Activated CD4-positive, alpha-beta T cell treated with anti-CD3 and anti-CD28 coated beads for 36 hours (primary cell): ENCODE measurements at regions of chr5 and their contacts with region 1.

Region 1: DNA sequence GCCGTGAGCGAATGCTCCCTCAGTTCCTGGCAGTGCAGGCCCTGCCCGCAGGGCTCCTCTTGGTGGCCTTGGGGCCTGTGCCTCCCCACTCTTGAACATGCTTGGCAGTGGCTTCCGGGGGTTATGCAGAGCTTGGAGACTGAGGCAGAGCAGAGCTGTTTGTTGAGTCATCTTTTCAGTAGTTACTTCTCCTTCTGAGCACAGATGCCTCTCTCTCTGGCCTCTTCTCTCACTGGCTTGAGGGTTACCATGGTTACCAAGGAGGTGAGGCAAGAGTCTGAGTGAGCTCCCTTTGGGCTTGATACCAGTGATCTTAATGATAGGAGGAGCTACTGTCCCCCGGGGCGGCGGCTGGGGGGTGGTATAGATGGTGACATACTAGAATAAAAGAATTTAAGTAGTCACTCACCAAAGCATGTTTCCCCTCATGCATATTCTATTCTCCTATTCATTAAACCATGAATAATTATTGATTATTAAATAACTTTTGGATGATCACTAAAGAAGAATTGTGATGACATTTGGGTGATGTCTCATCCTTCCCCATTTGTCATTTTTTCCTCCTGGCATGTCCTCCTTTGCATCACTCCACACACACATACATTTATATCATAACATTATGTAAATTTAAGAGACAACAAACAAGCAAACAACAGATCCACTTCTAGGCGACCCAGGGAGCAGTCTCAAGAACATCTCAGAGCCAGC is 111.1 kb downstream of the ARHGAP26 start:
- DNase-seq: no peak
- ATAC-seq: peak; percentile 58
- H3K4me3 Mint-ChIP-seq: no peak overlapping the region
- H3K27ac Mint-ChIP-seq: no peak overlapping the region
- H3K4me1 Mint-ChIP-seq: no peaks in the 10 kb centered on the region
- H3K27me3 Mint-ChIP-seq: no peaks in the 10 kb centered on the region

Region 2: GRCh38 chr5:141940695-141941271 is 940.4 kb before region 1 on chr5:
- CTCF ChIA-PET with region 1: no interaction called
- POLR2A ChIA-PET with region 1: no interaction called
- intact Hi-C with region 1: no loop called
- DNase-seq: no peak
- ATAC-seq: no peak
- H3K4me3 Mint-ChIP-seq: no peak overlapping the region
- H3K27ac Mint-ChIP-seq: no peak overlapping the region
- H3K4me1 Mint-ChIP-seq: peaks cover 3% of the 10 kb centered on the region
- H3K27me3 Mint-ChIP-seq: no peaks in the 10 kb centered on the region

Region 3: DNA sequence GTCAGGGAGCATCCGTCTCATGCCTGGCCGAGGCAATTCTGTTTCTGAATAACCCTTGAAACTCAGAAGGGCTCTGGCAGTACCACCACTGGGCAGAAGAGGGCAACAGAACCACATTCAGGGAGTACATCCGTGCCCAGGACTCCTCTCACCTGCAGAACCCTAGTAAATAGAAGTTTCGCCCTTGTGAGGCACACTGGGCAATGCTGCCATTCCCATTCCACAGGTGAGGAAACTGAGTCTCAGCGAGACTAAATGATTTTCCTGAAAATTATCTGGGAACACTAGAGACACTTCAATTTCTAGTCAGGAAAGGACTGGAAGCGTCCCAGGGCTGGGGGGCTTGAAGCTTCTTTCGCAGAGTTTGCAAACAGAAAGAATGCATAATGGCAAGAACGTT is 270.1 kb before region 1 on chr5:
- CTCF ChIA-PET with region 1: interaction called, 4 read pairs
- POLR2A ChIA-PET with region 1: no interaction called
- intact Hi-C with region 1: loop called (anchors 5 kb)
- DNase-seq: peak; percentile 85
- ATAC-seq: peak; percentile 97
- H3K4me3 Mint-ChIP-seq: no peak overlapping the region
- H3K27ac Mint-ChIP-seq: no peak overlapping the region
- H3K4me1 Mint-ChIP-seq: no peaks in the 10 kb centered on the region
- H3K27me3 Mint-ChIP-seq: peaks cover 12% of the 10 kb centered on the region

Region 4: GRCh38 chr5:142713121-142713706 is 168.0 kb before region 1 on chr5:
- CTCF ChIA-PET with region 1: interaction called, 371 read pairs
- POLR2A ChIA-PET with region 1: no interaction called
- intact Hi-C with region 1: loop called (anchors 1 kb)
- DNase-seq: peak; percentile 92
- ATAC-seq: peak; percentile 95
- H3K4me3 Mint-ChIP-seq: peak overlapping the region; percentile 64
- H3K27ac Mint-ChIP-seq: no peak overlapping the region
- H3K4me1 Mint-ChIP-seq: peaks cover 3% of the 10 kb centered on the region
- H3K27me3 Mint-ChIP-seq: no peaks in the 10 kb centered on the region

Region 5: GRCh38 chr5:142894749-142895148 is 13.5 kb after region 1 on chr5:
- CTCF ChIA-PET with region 1: interaction called, 42 read pairs
- POLR2A ChIA-PET with region 1: no interaction called
- intact Hi-C with region 1: no loop called
- DNase-seq: no peak
- ATAC-seq: no peak
- H3K4me3 Mint-ChIP-seq: no peak overlapping the region
- H3K27ac Mint-ChIP-seq: no peak overlapping the region
- H3K4me1 Mint-ChIP-seq: no peaks in the 10 kb centered on the region
- H3K27me3 Mint-ChIP-seq: no peaks in the 10 kb centered on the region